AG04449 (cell line): ENCODE measurements at regions of chr4 and their contacts with region 1.

Region 1: DNA sequence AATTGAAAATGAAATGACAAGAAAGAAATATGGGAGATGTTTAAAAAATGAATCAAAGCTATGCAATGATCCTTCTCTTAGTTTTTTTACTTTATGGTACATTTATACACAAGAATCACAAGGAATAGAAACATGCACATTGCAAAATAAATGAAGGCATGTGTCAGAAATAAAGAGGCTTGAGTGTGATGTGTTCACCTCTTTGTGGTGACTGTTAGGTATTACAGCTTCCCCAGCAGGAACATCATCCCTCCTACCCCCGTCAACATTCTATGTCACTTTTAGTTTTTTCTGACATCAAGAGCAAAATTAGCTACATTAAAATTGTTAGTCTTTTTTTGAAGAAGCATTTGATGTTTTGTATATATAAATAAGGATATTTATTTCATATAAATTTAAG is 214.8 kb downstream of the SLC4A4 start:
- DNase-seq: no peak
- H3K4me3 ChIP-seq: no peak overlapping the region
- CTCF ChIP-seq: peak; percentile 63

Region 2: DNA sequence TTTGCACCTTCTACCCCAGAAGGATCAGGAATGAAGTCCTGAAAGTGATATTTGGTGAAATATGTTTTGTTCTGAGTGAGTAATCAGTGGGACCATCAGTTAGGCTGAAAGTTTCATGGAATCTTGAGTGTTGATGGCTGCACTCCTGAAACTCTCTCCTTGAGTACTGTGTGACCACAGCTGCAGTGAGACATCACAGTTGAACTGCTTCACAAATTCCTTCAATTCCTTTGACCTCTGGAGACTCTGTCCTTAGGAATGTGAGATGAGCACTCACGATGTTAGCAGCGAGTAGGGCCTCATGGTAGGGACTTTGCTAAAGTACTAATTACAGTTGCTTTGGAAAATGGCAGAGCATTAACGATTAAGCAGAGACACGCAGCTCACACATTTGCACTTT is 357.7 kb before region 1 on chr4:
- CTCF ChIA-PET with region 1: interaction called, 14 read pairs
- POLR2A ChIA-PET with region 1: no interaction called
- DNase-seq: peak; percentile 62
- H3K4me3 ChIP-seq: no peak overlapping the region
- CTCF ChIP-seq: no peak

Region 3: DNA sequence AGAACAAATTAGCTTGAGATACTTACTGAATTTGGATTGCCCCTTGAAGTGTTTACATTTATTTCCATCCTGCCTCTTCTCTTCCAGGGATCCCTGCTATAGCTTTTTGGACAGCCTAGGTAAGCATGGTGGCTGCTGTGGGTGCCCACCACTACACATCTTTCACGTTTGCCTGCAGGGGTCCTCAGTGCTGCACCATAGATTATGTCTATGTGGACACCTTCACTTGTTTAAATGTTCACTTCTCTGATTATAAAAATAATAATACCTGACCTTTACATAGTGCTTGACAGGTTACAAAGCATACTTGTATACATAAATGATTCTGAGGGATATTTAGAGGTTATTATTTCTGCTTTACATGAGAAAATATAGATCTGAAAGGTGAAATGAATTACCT is 282.7 kb before region 1 on chr4:
- CTCF ChIA-PET with region 1: interaction called, 25 read pairs
- POLR2A ChIA-PET with region 1: no interaction called
- DNase-seq: no peak
- H3K4me3 ChIP-seq: no peak overlapping the region
- CTCF ChIP-seq: peak; percentile 40

Region 4: GRCh38 chr4:71570492-71570891 is 16.9 kb after region 1 on chr4:
- CTCF ChIA-PET with region 1: no interaction called
- POLR2A ChIA-PET with region 1: no interaction called
- DNase-seq: no peak
- H3K4me3 ChIP-seq: no peak overlapping the region
- CTCF ChIP-seq: no peak

Region 5: GRCh38 chr4:71923070-71923469 is 369.5 kb after region 1 on chr4:
- CTCF ChIA-PET with region 1: no interaction called
- POLR2A ChIA-PET with region 1: no interaction called
- DNase-seq: no peak
- H3K4me3 ChIP-seq: no peak overlapping the region
- CTCF ChIP-seq: no peak